ENCODE measurements at regions of chr11 and their contacts with region 1.

Region 1: DNA sequence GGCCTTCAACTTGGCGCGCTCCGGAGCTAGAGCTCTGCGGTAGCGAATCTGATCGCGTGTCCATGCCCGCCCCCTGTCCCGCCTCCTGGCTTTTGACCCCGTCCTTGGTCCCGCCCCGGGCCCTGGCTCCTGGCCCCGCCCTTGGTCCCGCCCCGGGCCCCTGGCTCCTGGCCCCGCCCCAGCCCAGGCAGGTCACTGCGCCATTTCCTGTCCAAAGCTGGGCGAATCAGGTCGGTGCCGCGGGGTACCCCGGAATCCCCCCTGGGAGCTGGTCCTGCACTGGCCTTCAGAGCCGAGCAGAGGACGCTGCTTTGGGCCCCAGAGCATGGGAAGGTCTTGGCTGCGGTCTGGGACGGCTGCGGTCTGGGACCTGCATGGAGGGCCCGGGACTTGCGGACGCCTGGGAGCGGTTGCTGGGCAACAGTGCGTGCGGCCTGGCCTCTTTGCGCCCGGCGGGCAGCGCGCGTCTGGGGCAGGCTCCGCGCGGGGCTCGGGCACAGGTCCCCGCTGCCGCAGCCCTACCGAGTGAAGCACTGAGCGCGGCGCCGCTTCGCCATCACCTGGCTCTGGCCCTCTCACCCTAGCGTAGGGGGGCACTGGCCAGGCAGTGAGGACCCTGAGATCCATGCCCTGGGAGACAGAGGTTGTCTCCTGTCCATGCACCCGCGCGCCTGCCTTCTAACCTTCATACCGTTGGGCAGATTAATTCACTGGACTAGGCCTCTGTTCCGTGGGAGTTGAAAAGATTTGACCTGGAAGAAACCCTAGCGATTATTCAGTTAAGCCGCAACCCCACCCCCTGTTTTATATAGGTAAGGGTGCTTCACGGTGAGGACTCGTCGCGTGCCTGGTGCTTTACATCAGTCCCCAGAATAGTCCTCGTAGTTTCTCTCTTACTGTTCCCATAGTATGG is at the start of gene TTC12:
- DNase-seq: peak; percentile 88
- H3K4me3 Mint-ChIP-seq: peak within 1 kb of the TSS; percentile 77
- H3K27ac Mint-ChIP-seq: peak within 1 kb of the TSS; percentile 58
- H3K4me1 Mint-ChIP-seq: peaks cover 17% of the 10 kb centered on the region
- H3K27me3 Mint-ChIP-seq: no peaks in the 10 kb centered on the region
- total RNA-seq, gene TTC12: 7.0 and 11.4 TPM in 2 replicates

Region 2: GRCh38 chr11:112226062-112226830 is 1088.4 kb before region 1 on chr11 and contains the start of gene PTS:
- intact Hi-C with region 1: loop called (anchors 1 kb)
- DNase-seq: peak; percentile 83
- H3K4me3 Mint-ChIP-seq: peak within 1 kb of the TSS; percentile 89
- H3K27ac Mint-ChIP-seq: peak within 1 kb of the TSS; percentile 92
- H3K4me1 Mint-ChIP-seq: peaks cover 21% of the 10 kb centered on the region
- H3K27me3 Mint-ChIP-seq: peaks cover 2% of the 10 kb centered on the region
- total RNA-seq, gene PTS: 30.5 and 33.4 TPM in 2 replicates

Region 3: DNA sequence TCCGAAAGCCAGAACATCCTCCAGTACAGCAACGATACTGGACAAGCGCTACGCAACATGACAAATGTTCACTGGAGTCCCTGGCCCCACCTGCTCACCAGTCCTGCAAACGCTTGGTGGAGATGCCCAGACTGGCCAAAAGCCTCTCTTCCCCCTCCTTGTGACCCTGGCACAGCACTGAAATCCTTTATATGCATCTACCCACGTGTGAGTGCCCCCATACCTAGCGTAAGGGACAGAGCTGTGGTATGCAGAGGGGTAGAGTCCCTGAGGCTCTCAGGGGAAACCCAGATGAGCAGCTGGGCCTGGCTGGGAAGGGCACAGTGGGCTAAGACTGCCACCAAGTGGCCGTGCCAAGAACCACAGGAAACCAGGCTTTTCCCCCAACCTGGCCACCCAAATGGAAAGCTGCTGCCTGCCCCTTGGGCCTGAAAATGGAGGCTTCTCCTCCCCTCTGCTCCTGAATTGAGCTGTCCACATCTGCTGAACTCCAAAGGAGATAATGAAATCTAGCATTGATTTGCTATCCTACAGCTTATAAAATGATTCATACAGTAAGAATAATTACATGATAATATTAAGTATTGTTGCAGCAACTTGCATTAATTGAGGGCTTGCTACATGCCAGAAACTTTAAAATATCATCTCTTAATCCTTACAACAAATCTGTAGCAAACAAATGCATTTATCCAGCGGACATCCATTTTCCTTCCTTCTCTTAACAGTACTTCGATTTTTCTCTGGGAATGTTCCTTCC is 25.0 kb before region 1 on chr11:
- intact Hi-C with region 1: no loop called
- DNase-seq: peak; percentile 54
- H3K4me3 Mint-ChIP-seq: no peak overlapping the region
- H3K27ac Mint-ChIP-seq: no peak overlapping the region
- H3K4me1 Mint-ChIP-seq: no peaks in the 10 kb centered on the region
- H3K27me3 Mint-ChIP-seq: no peaks in the 10 kb centered on the region

Region 4: DNA sequence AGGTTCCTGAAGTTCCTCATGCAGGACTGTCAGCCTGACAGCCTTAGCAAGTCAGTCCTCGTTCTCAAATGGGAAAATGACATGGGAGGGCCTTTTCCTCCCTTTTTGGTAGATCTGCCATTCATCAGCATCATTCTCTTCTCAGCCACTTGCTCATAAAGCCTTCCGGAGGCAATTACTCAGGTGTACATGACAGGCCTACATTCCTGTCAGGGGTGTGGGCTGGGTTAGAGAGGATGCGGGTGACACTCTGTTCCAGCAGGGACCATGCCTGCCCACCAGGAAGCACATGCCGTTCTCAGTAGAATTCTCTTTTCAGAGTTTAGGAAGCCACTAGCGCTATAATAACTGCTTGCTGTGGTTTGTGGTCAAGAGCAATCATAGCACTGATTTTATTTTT is 48.8 kb after region 1 on chr11:
- intact Hi-C with region 1: no loop called
- DNase-seq: no peak
- H3K4me3 Mint-ChIP-seq: no peak overlapping the region
- H3K27ac Mint-ChIP-seq: no peak overlapping the region
- H3K4me1 Mint-ChIP-seq: peaks cover 4% of the 10 kb centered on the region
- H3K27me3 Mint-ChIP-seq: no peaks in the 10 kb centered on the region

Region 5: DNA sequence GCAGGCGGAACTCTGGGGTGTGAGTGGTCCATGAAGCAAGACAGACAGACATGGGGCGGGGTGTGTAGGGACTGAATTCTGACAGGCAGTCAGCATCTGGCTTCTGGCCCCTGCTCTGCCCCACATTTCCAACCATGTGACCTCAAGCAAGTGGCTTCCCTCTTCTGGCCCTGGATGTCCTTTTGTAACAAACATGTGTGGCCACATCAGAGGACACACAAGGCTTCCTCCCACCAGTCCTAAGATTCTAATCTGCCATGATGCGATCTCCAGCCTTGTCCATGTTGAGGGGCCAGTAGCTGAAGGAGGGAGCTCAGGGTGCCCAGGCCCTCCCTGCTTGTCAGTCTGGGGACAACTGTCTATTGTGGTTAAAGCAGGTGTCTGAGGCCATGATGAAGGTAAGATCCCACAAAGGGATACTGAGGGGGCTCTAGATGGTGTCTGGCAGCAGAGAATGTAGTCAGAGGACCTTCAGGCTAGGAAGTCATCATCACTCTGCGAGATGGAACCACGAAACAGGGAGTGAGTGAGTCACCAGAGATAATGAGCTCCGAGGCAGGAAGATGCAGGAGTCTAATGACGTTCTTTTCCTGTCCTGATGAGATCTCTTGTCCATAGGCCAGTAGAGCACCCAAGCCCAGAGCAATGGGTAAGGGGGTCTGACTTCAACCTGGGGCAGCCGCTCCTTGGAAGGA is 133.1 kb after region 1 on chr11:
- intact Hi-C with region 1: loop called (anchors 2 kb)
- DNase-seq: peak; percentile 13
- H3K4me3 Mint-ChIP-seq: no peak overlapping the region
- H3K27ac Mint-ChIP-seq: peak overlapping the region; percentile 90
- H3K4me1 Mint-ChIP-seq: peaks cover 26% of the 10 kb centered on the region
- H3K27me3 Mint-ChIP-seq: peaks cover 7% of the 10 kb centered on the region

Region 6: DNA sequence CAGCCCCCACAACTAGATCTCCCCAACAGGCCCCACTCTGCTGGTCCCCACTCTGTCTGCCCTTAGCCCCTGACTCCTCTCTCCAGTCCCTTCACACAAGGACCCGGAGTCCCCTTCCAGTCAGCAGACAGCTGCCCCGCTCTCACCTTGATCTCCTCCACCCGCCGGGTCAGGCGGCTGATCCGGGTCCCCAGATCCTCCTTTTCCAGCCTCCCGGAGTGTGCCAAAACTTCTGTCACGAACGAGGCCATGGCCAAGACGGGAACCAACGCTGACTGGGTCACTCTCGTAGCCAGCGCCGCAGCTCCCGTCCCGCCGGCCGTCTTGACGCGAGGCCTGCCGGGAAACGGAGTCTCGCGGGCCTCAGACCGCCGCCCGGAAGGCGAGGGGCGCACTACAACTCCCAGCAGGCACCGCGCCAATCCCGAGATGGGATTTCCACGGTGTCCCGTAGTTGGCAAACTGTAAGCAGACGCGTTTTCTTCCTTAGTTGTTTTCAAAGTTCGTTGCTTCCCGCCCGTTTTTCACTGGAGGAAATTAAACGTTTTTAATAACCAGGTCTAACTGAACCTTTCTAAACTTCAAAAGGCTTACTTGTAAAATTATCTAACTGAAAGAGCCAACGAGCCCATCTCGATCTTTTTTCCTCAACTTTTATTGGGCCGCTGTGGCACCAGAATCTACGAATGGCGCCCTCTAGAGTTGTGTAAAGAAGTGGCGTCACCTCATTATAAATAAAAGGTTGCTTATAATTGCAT is 458.9 kb after region 1 on chr11 and contains the start of gene ZW10:
- intact Hi-C with region 1: loop called (anchors 2 kb)
- DNase-seq: peak; percentile 90
- H3K4me3 Mint-ChIP-seq: peak within 1 kb of the TSS; percentile 98
- H3K27ac Mint-ChIP-seq: peak within 1 kb of the TSS; percentile 98
- H3K4me1 Mint-ChIP-seq: peaks cover 22% of the 10 kb centered on the region
- H3K27me3 Mint-ChIP-seq: peaks cover 12% of the 10 kb centered on the region
- total RNA-seq, gene ZW10: 24.4 TPM in 2 replicates

Measured in activated T-helper 2 cell treated with anti-CD3 and anti-CD28 coated beads, Interferon-gamma antibody, Interleukin-2, Interleukin-4, amounts not matched to agents 10 μg/mL and 5 μg/mL and 100 μg/mL, durations not matched to agents 14 hours and 24 hours and 36 hours (primary cell).